PC-9 (cell line): ENCODE measurements at regions of chr19 and their contacts with region 1.

Region 1: GRCh38 chr19:45405435-45406225 is 761 bp upstream of the PPP1R13L start:
- DNase-seq: peak; percentile 90 to 94
- H3K4me3 ChIP-seq: peak overlapping the region; percentile 95
- H3K27ac ChIP-seq: peak overlapping the region; percentile 91
- H3K4me1 ChIP-seq: peaks cover 18% of the 10 kb centered on the region
- H3K27me3 ChIP-seq: no peaks in the 10 kb centered on the region
- CTCF ChIP-seq: no peak

Region 2: DNA sequence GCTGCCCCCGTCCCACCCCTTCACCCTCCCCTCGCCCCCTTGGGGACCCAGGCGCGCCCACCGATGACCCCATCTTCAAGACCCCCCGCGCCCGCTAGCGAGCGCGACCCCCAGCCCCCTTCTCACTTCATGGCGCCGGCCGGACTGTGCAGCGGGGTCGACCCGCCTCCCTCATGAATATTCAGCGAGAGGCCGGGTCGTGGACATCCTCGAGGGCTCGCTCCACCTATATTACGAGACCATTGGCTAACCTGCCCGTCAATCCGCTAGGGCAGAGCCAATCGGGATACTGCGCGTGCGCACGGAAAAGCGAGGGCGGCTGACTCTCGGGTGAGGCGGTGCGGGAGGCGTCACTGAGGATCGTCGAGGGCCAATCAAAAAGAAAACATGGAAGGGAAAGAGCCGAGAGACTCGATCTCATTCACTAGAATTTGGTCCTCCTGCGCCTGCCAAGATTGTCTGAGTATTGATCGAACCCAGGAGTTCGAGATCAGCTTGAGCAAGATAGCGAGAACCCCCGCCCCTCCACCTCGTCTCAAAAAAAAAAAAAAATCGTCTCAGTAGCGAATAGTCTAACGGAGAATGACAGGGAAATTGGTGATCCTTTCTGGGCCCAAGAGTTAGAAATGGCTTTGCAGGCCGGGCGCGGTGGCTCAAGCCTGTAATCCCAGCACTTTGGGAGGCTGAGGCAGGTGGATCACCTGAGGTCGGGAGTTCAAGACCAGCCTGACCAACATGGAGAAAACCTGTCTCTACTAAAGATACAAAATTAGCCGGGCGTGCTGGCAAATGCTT is 35.0 kb before region 1 on chr19 and contains the start of gene ERCC2:
- CTCF ChIA-PET with region 1: no interaction called
- POLR2A ChIA-PET with region 1: interaction called, 6 read pairs
- intact Hi-C with region 1: loop called (anchors 1 kb)
- DNase-seq: peak; percentile 96 to 99
- H3K4me3 ChIP-seq: peak within 1 kb of the TSS; percentile 71
- H3K27ac ChIP-seq: peak within 1 kb of the TSS; percentile 53
- H3K4me1 ChIP-seq: peaks cover 11% of the 10 kb centered on the region; the same call in 1 of the 2 replicates
- H3K27me3 ChIP-seq: no peaks in the 10 kb centered on the region
- CTCF ChIP-seq: no peak
- total RNA-seq, gene ERCC2: 26.1 and 33.1 TPM in 2 replicates

Region 3: DNA sequence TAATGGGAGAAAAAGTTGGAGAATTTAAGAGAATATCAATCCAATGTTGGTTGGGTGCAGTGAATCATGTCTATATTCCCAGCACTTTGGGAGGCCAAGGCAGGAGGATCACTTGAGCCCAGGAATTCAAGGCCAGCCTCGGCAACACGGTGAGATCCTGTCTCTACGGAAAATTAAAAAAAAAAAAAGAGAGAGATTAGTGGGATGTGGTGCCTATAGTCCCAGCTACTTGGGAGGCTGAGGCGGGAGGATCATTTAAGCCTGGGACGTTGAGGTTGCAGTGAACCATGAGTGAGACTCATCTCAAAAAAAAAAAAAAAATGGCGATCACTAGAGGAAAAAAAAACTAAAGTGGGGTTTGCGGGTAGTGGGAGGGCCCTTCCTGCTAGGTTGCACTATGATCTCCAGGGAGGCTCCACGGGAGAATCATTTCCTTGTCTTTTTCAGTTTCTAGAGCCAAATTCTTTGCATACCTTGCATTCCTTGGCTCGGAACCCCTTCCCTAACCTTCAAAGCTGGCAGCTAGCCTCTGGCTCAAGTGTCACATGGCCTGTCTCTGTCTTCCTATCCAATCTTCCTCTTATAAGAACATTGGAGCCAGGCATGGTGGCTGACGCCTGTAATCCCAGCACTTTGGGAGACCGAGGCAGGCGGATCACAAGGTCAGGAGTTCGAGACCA is 29.4 kb before region 1 on chr19:
- CTCF ChIA-PET with region 1: no interaction called
- POLR2A ChIA-PET with region 1: interaction called, 14 read pairs
- intact Hi-C with region 1: no loop called
- DNase-seq: peak; percentile 85 to 94
- H3K4me3 ChIP-seq: no peak overlapping the region
- H3K27ac ChIP-seq: peak overlapping the region; percentile 76
- H3K4me1 ChIP-seq: peaks cover 22% of the 10 kb centered on the region
- H3K27me3 ChIP-seq: no peaks in the 10 kb centered on the region
- CTCF ChIP-seq: no peak

Region 4: GRCh38 chr19:45423589-45424190 is 18.1 kb after region 1 on chr19 and contains the start of gene ERCC1:
- CTCF ChIA-PET with region 1: no interaction called
- POLR2A ChIA-PET with region 1: interaction called, 8 read pairs
- intact Hi-C with region 1: loop called (anchors 1 kb)
- DNase-seq: peak; percentile 97 to 99
- H3K4me3 ChIP-seq: peak within 1 kb of the TSS; percentile 77
- H3K27ac ChIP-seq: peak within 1 kb of the TSS; percentile 99
- H3K4me1 ChIP-seq: peaks cover 39% of the 10 kb centered on the region
- H3K27me3 ChIP-seq: no peaks in the 10 kb centered on the region
- CTCF ChIP-seq: no peak
- total RNA-seq, gene ERCC1: 102 and 138 TPM in 2 replicates

Region 5: GRCh38 chr19:45478454-45479238 is 73.0 kb after region 1 on chr19:
- CTCF ChIA-PET with region 1: interaction called, 3 read pairs
- POLR2A ChIA-PET with region 1: interaction called, 3 read pairs
- intact Hi-C with region 1: loop called (anchors 1 kb)
- DNase-seq: peak; percentile 87 to 90
- H3K4me3 ChIP-seq: peak overlapping the region; percentile 62
- H3K27ac ChIP-seq: peak overlapping the region; percentile 83
- H3K4me1 ChIP-seq: peaks cover 12% of the 10 kb centered on the region
- H3K27me3 ChIP-seq: no peaks in the 10 kb centered on the region
- CTCF ChIP-seq: peak; percentile 99

Region 6: DNA sequence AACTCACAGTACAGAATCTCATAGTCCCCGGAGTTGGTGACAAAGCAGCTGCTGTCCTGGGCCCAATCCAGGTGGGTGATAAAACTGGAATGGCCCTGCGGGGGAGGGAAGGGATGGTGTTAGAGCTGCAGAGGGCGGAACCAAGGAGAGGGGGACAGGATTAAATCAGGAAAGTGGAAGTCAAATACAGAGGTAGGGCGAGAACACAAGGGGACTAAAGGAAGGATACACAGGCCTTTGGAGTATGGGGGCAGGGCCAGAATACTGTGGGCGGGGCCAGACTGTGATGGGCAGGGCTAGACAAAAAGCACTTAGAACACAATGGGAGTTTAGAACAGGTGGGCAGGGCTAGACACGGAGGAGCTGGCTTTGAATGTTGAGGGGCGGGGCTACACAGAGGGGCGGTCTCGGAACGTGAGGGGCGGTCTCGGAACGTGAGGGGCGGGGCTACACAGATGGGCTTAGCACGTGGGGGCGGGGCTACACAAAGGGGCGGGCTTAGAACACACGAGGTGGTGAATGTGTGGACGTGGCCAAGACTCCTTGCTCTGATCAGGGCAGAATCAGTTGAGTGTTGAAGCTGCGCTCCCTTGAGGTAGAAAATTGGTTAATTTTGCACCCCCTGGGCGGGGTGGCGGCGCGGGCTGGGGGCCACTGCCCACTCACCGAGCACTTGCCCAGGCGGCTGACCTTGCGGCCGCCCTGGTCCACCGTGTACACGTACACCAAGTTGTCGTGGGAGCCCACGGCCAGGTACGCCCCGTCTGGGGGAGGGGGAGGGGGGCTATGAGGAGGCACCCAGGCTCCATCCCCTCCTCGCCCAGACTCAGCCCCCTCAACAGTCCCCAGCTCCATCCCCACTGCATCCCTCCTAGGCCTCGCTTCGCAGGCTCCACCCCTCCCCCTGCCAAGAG is 210.4 kb after region 1 on chr19:
- CTCF ChIA-PET with region 1: no interaction called
- POLR2A ChIA-PET with region 1: no interaction called
- intact Hi-C with region 1: no loop called
- DNase-seq: peak; percentile 80 to 87
- H3K4me3 ChIP-seq: no peak overlapping the region
- H3K27ac ChIP-seq: peak overlapping the region; percentile 53
- H3K4me1 ChIP-seq: peaks cover 22% of the 10 kb centered on the region
- H3K27me3 ChIP-seq: no peaks in the 10 kb centered on the region
- CTCF ChIP-seq: no peak

Region 7: GRCh38 chr19:45705115-45705514 is 299.5 kb after region 1 on chr19:
- CTCF ChIA-PET with region 1: interaction called, 11 read pairs
- POLR2A ChIA-PET with region 1: no interaction called
- intact Hi-C with region 1: no loop called
- DNase-seq: no peak
- H3K4me3 ChIP-seq: no peak overlapping the region
- H3K27ac ChIP-seq: no peak overlapping the region
- H3K4me1 ChIP-seq: no peaks in the 10 kb centered on the region
- H3K27me3 ChIP-seq: no peaks in the 10 kb centered on the region
- CTCF ChIP-seq: no peak